Activated naive CD4-positive, alpha-beta T cell treated with anti-CD3 and anti-CD28 coated beads for 36 hours (primary cell): ENCODE measurements at regions of chr17 and their contacts with region 1.

Region 1: DNA sequence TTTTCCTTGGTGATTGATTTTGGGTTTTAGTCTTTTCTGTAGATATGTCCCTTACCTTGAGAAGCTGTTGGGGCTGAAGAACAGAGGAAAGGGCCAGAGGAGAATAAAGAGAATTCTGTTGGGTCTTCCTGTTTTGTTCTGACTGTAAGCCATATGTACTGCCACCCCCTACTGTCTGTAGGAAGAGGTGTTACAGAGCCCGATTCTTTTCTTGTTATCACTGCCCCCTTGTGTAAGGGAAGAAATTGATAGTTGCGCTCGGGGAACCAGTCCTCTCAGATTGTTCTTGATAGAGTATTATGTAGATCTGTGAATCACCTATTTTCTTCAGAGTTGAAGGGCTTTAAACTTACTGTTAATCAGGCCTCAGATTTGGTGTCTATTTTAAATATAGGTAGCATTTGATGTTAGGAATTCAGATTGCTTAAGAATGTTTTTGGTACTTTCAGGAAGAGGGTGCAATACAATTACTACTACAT is 2.4 kb downstream of the TANC2 start:
- DNase-seq: peak; percentile 66
- H3K4me3 Mint-ChIP-seq: no peak overlapping the region
- H3K27ac Mint-ChIP-seq: no peak overlapping the region
- H3K4me1 Mint-ChIP-seq: peaks cover 22% of the 10 kb centered on the region
- H3K27me3 Mint-ChIP-seq: peaks cover 11% of the 10 kb centered on the region

Region 2: DNA sequence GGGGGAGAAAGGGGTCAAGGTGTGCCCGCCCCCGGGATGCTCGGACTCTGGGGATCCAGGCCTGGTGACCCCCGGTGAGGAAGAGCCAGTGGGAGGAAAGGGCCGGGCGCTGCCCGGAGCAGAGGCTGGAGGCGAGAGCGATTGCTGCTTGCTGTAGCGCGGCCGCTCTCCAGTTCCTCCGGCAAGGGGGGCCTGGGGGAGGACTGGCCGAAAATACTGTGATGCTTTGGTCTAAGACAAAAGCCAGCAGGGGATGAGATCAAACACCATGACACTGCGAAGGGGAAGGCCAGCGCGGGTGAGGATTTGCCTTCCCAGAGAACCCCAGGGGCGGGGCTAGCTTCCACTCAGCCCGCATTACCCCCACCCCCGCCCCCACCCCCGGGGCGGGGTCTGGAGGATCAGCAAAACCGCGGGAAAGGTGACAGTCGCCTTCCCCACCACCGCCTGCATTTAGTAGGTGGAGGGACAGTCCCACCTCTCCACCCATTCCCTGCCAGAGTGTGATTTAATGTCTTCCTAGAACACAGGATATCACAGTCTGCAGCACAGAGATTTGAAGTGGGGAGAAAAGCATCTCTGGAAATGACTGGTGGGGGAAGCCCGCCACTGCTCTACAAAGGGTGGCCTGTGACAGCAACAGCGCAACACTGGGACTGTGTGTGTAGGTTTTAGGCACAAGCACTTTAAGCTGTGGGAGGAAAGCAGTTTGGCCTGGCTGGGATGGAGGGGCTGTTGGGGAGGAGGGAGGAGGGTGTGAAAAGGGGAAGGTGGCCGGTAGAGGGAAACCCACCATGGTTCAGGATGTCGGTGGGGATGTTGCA is 315.3 kb before region 1 on chr17:
- CTCF ChIA-PET with region 1: no interaction called
- intact Hi-C with region 1: loop called (anchors 1 kb)
- DNase-seq: peak; percentile 98
- H3K4me3 Mint-ChIP-seq: peak overlapping the region; percentile 76
- H3K27ac Mint-ChIP-seq: peak overlapping the region; percentile 69
- H3K4me1 Mint-ChIP-seq: peaks cover 19% of the 10 kb centered on the region
- H3K27me3 Mint-ChIP-seq: peaks cover 39% of the 10 kb centered on the region

Region 3: DNA sequence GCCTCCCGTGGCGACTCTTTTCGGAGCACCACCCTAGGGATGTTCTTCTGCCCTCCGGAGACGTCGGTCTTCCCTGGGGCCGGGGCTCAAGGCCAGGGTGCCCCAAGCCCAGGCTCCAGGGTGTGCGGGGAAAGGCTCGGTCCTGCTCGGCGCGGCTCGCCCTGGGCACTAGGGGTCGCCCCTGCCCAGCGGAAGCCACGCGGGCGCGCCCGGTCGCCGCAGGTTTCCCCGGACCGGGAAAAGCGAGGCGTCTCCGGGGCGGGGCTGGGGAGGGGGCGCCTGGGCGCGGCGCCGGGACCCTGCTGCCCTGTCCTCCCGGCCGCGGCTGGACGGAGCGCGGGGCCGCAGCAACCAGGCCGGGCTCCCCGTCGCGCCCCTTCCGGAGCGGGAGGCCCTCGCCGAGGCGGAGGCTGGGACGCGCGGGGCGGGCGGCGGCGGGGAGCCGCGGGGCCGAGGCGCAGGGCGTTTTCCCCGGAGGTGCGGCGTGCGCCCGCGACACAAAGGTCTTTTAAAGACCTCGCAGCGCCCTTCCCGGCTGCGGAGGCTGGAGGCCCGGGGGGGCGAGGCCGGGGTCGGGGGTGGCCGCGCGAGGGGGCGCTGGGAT is 264.6 kb before region 1 on chr17:
- CTCF ChIA-PET with region 1: no interaction called
- intact Hi-C with region 1: loop called (anchors 1 kb)
- DNase-seq: peak; percentile 71
- H3K4me3 Mint-ChIP-seq: peak overlapping the region; percentile 34
- H3K27ac Mint-ChIP-seq: no peak overlapping the region
- H3K4me1 Mint-ChIP-seq: peaks cover 4% of the 10 kb centered on the region
- H3K27me3 Mint-ChIP-seq: peaks cover 34% of the 10 kb centered on the region

Region 4: DNA sequence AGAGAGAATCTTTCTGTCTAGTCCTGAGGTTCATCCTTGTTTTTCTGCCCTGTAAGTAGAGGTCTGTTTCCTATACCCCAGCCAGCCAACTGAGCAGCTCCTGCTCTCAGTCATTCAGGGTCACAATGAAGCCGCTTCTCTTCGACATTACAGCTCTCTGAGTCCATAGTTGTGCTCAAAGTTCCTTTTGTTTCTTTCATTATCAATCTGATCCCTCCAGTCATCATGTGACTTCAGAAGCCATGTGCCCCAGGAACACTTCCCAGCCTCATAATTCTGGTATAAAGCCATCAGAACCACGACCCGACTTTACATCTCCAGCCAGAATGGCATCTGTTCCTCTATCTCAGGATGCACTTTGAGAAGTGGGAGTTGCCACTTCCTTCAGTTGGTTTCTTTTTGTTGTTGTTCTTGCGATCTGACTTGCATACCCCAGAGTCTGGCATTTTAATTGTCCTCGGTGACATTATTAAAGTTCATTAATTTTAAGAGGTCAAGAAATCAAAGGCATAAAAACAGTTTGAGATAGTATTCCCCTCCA is 174.0 kb before region 1 on chr17:
- CTCF ChIA-PET with region 1: no interaction called
- intact Hi-C with region 1: loop called (anchors 2 kb)
- DNase-seq: no peak
- H3K4me3 Mint-ChIP-seq: peak overlapping the region; percentile 17
- H3K27ac Mint-ChIP-seq: no peak overlapping the region
- H3K4me1 Mint-ChIP-seq: peaks cover 9% of the 10 kb centered on the region
- H3K27me3 Mint-ChIP-seq: peaks cover 17% of the 10 kb centered on the region

Region 5: DNA sequence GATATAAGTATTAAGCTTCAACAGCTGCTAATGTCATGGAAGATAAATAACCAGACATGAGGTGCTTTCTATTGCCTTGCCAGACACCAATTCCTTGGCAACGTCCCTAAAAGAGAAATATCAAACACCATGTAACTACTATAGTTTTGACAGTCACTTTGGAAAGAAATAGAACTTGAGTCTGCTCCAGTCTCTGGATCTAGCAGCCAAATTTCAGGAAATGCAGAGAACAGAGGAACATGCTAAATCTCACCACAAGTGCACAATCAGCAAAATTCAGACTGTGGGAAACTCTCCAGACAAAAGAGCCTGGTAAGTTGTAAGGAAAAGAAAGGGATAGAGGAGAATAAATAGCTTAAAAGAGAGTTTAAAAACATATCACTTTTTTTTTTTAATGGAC is 30.9 kb before region 1 on chr17:
- CTCF ChIA-PET with region 1: no interaction called
- intact Hi-C with region 1: no loop called
- DNase-seq: no peak
- H3K4me3 Mint-ChIP-seq: no peak overlapping the region
- H3K27ac Mint-ChIP-seq: no peak overlapping the region
- H3K4me1 Mint-ChIP-seq: no peaks in the 10 kb centered on the region
- H3K27me3 Mint-ChIP-seq: peaks cover 31% of the 10 kb centered on the region

Region 6: DNA sequence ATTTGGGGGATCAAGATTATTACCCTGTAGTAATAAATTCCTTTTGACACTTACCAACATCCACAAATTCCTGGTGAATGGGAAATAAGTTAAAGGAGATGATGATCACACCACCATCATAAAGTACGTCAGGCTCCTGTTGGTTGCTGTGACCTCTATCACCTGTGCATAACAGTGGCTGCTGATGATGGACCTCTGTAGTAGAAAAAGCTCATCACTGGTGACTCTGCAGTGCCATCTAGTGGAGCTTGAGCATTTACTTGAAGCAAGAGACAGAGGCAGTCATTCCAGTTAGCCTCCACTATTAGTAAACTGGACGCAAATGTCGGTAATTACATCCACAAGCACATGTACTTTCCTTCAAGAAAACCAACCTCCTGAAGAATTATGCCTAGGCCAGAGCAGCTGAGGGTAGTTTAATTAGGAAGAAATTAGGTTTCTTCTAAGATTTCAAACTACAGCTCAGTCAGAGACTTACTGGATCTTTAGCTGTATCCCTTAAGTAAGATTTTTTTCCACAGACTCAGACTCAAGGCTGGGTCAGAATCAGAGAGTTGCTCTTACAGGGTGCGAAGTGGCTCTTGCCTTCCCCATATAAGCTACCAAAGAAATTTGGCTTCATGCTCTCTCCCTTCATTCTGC is 438.3 kb after region 1 on chr17:
- CTCF ChIA-PET with region 1: interaction called, 5 read pairs
- intact Hi-C with region 1: loop called (anchors 10 kb)
- DNase-seq: peak; percentile 88
- H3K4me3 Mint-ChIP-seq: no peak overlapping the region
- H3K27ac Mint-ChIP-seq: no peak overlapping the region
- H3K4me1 Mint-ChIP-seq: peaks cover 2% of the 10 kb centered on the region
- H3K27me3 Mint-ChIP-seq: no peaks in the 10 kb centered on the region